AG04449 (cell line): ENCODE measurements at regions of chr19 and their contacts with region 1.

Region 1: GRCh38 chr19:11035441-11036377 is 53.6 kb upstream of the LDLR start:
- DNase-seq: peak; percentile 19
- H3K4me3 ChIP-seq: no peak overlapping the region
- CTCF ChIP-seq: peak; percentile 94

Region 2: GRCh38 chr19:10842788-10843187 is 192.9 kb before region 1 on chr19:
- CTCF ChIA-PET with region 1: no interaction called
- POLR2A ChIA-PET with region 1: no interaction called
- DNase-seq: no peak
- H3K4me3 ChIP-seq: no peak overlapping the region
- CTCF ChIP-seq: no peak

Region 3: GRCh38 chr19:10952809-10953208 is 82.9 kb before region 1 on chr19:
- CTCF ChIA-PET with region 1: no interaction called
- POLR2A ChIA-PET with region 1: no interaction called
- DNase-seq: no peak
- H3K4me3 ChIP-seq: no peak overlapping the region
- CTCF ChIP-seq: no peak

Region 4: GRCh38 chr19:10986261-10987127 is 49.2 kb before region 1 on chr19:
- CTCF ChIA-PET with region 1: interaction called, 12 read pairs
- POLR2A ChIA-PET with region 1: no interaction called
- DNase-seq: no peak
- H3K4me3 ChIP-seq: no peak overlapping the region
- CTCF ChIP-seq: no peak

Region 5: DNA sequence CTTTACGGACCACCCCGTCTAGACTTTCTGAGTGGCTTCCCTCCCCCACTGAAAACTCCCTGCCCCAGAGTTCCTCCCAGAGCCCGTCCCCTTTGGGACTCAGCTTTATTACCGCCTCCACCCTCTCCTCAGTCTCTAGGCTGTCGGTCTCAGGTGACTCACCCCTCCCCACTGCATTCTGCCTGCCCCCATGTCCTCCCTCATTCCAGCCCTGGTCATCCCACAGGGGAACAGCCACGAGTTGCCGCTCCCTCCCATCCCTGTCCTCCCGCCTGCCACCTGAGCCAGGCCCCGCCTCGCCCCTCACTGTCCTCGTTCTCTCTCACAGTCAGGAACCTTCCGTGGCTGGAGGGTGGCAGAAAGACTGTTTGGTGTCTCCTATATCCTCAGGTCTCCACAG is 17.5 kb before region 1 on chr19:
- CTCF ChIA-PET with region 1: interaction called, 56 read pairs
- POLR2A ChIA-PET with region 1: no interaction called
- DNase-seq: no peak
- H3K4me3 ChIP-seq: no peak overlapping the region
- CTCF ChIP-seq: no peak

Region 6: DNA sequence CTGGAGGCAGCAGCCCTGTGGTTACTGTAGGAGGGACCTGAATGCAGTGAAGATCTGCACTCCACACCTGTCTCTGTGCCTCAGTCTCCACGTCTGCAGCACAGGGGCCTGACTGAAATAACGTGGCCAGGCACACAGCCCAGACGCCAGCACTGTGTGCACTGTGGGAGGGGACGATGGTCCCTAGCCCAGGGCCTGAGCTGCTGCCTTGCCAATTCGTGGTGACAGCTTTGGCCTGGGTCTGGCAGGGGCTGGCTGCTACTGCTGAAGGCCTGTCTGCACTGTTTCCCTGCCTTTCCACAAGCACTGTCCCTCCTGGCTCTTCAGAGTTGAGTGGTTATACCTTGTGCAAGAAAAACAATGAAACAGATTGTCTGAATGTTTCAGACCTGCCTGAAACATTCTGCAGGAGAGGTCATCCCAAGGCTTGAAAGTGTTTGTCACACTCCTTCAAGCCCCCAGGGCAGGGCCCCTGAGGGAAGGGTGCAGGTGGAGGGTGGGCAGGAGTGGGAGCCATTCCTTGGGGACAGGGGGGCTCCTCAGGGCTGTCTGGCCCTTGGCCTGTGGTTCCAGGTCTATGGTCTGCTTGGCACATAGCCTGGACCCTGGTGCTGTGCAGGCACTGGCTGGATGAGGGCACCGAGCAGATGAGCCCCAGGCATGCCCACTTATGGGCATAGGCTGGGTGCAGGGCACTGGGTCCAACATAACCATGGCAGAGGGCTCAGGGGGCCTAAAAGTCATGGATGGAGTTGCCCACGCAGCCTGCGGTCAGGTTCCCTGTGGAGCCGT is 14.8 kb after region 1 on chr19:
- CTCF ChIA-PET with region 1: interaction called, 50 read pairs
- POLR2A ChIA-PET with region 1: no interaction called
- DNase-seq: no peak
- H3K4me3 ChIP-seq: no peak overlapping the region
- CTCF ChIP-seq: no peak

Region 7: GRCh38 chr19:11090054-11090900 is 54.6 kb after region 1 on chr19:
- CTCF ChIA-PET with region 1: interaction called, 29 read pairs
- POLR2A ChIA-PET with region 1: no interaction called
- DNase-seq: peak; percentile 57
- H3K4me3 ChIP-seq: peak overlapping the region; percentile 91
- CTCF ChIP-seq: no peak

Region 8: GRCh38 chr19:11155373-11156120 is 119.8 kb after region 1 on chr19 and contains the start of gene SPC24:
- CTCF ChIA-PET with region 1: no interaction called
- POLR2A ChIA-PET with region 1: no interaction called
- DNase-seq: peak; percentile 91
- H3K4me3 ChIP-seq: peak within 1 kb of the TSS; percentile 93
- CTCF ChIP-seq: peak; percentile 3

Region 9: GRCh38 chr19:11203194-11204075 is 167.7 kb after region 1 on chr19:
- CTCF ChIA-PET with region 1: interaction called, 13 read pairs
- POLR2A ChIA-PET with region 1: no interaction called
- DNase-seq: peak; percentile 34
- H3K4me3 ChIP-seq: no peak overlapping the region
- CTCF ChIP-seq: peak; percentile 91